Activated CD4-positive, alpha-beta T cell treated with anti-CD3 and anti-CD28 coated beads for 36 hours (primary cell): ENCODE measurements at regions of chr2 and their contacts with region 1.

Region 1: GRCh38 chr2:45778720-45779171 is 127.3 kb downstream of the PRKCE start:
- DNase-seq: peak; percentile 78
- ATAC-seq: peak; percentile 90
- H3K4me3 Mint-ChIP-seq: no peak overlapping the region
- H3K27ac Mint-ChIP-seq: no peak overlapping the region
- H3K4me1 Mint-ChIP-seq: peaks cover 3% of the 10 kb centered on the region
- H3K27me3 Mint-ChIP-seq: no peaks in the 10 kb centered on the region

Region 2: DNA sequence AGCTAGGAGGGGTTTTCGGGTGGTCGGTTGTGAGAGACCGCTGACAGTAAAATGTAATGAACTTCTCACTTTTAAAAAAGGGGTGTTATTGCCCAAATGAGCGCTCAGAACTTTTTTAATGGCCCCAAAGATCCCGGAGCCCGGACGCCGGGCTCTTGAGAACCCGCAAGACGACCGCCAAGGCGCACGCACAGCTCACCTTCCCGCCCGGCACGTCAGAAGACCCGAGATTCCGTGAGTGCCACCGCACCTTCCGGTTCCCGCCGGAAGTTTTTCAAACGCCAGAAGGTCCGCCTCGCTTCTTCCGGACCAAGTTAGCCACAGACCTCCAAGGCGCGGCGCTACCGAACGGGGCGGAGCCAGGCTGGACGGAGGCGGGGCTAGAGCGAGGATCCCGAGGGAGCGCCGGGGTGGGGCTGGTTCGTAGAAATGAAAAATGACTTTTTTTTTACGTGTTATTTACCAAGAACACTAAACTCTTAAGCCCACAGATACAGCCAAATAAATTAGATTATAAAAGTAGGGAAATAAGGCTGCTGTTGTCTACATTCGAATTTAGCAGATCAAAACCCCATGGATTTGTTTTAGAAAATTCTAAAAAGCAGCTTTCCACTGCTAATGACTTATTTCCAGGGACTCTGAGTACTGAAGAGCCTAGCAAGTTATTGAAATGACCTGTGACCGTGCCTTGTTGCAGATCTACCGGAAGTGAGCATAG is 167.6 kb before region 1 on chr2 and contains the start of gene SRBD1:
- CTCF ChIA-PET with region 1: interaction called, 3 read pairs
- POLR2A ChIA-PET with region 1: no interaction called
- intact Hi-C with region 1: loop called in 1 of 2 experiments (anchors 1 kb)
- DNase-seq: peak; percentile 96
- ATAC-seq: peak; percentile 97
- H3K4me3 Mint-ChIP-seq: peak within 1 kb of the TSS; percentile 93
- H3K27ac Mint-ChIP-seq: peak within 1 kb of the TSS; percentile 94
- H3K4me1 Mint-ChIP-seq: peaks cover 19% of the 10 kb centered on the region
- H3K27me3 Mint-ChIP-seq: no peaks in the 10 kb centered on the region
- total RNA-seq, gene SRBD1: 19.2 to 25.0 TPM

Region 3: DNA sequence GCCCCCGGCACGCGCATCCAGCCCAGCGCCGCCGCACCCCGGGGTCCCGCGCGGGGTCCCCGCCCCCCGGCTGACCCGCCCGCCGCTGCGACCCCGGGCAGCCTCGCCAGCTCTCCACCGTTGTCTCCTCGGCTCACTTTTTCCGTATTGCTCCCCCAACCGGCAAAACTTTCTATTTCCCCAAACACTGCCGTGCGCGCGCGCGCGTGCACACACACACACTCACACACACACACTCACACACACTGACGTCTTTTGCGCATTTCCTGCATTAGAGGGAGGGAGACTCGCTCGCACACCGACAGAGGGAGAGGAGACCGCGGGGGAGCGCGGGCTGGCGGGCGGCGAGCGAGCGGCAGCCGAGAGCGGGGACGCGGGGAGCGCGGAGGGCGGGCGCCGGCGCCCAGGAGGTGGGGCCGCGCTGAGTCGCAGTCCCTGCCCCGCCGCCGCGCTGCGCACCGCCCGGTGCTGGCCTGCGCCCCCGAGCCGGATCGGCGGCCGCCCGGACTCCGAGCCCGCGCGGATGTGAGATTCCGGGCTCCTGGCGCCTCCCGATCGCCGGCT is 127.8 kb before region 1 on chr2:
- CTCF ChIA-PET with region 1: interaction called, 63 read pairs
- POLR2A ChIA-PET with region 1: interaction called, 4 read pairs
- intact Hi-C with region 1: no loop called
- DNase-seq: peak; percentile 94
- ATAC-seq: peak; percentile 85
- H3K4me3 Mint-ChIP-seq: peak overlapping the region; percentile 87
- H3K27ac Mint-ChIP-seq: peak overlapping the region; percentile 96
- H3K4me1 Mint-ChIP-seq: peaks cover 27% of the 10 kb centered on the region
- H3K27me3 Mint-ChIP-seq: peaks cover 6% of the 10 kb centered on the region

Region 4: GRCh38 chr2:45794134-45794617 is 15.4 kb after region 1 on chr2:
- CTCF ChIA-PET with region 1: interaction called, 24 read pairs
- POLR2A ChIA-PET with region 1: no interaction called
- intact Hi-C with region 1: no loop called
- DNase-seq: no peak
- ATAC-seq: no peak
- H3K4me3 Mint-ChIP-seq: no peak overlapping the region
- H3K27ac Mint-ChIP-seq: no peak overlapping the region
- H3K4me1 Mint-ChIP-seq: no peaks in the 10 kb centered on the region
- H3K27me3 Mint-ChIP-seq: no peaks in the 10 kb centered on the region